Sigmoid colon (tissue), 7 donors: ENCODE measurements at regions of chr17 and their contacts with region 1.

Region 1: GRCh38 chr17:4986951-4987766 is at the start of gene CAMTA2:
- DNase-seq: peak; percentile 95
- H3K4me3 ChIP-seq: peak within 1 kb of the TSS; percentile 68 to 97 (median 80)
- H3K27ac ChIP-seq: peak within 1 kb of the TSS; percentile 93 to 97 (median 95)
- H3K4me1 ChIP-seq: peaks cover 0 to 31% (median 25%) of the 10 kb centered on the region in 4 donors
- H3K27me3 ChIP-seq: no peaks in the 10 kb centered on the region
- CTCF ChIP-seq: peak; percentile 75 to 83 (median 78)
- EP300 ChIP-seq: no peak
- POLR2A ChIP-seq: peak; percentile 46 to 64
- total RNA-seq, gene CAMTA2: 9.9 to 24.6 (median 21.7) TPM

Region 2: GRCh38 chr17:4789901-4790704 is 197.1 kb before region 1 on chr17:
- intact Hi-C with region 1: loop called (anchors 5 kb)
- DNase-seq: peak; percentile 94
- H3K4me3 ChIP-seq: peak overlapping the region; percentile 59 to 77 (median 72)
- H3K27ac ChIP-seq: peak overlapping the region; percentile 95 to 99 (median 96)
- H3K4me1 ChIP-seq: peaks cover 0 to 46% (median 41%) of the 10 kb centered on the region in 4 donors
- H3K27me3 ChIP-seq: peaks cover 0 to 9% (median 0%) of the 10 kb centered on the region in 3 donors
- CTCF ChIP-seq: peak; percentile 31 to 86 (median 74)
- EP300 ChIP-seq: no peak
- POLR2A ChIP-seq: peak; percentile 91

Region 3: GRCh38 chr17:4908301-4908700 is 78.9 kb before region 1 on chr17:
- intact Hi-C with region 1: loop called (anchors 2 kb)
- DNase-seq: no peak
- H3K4me3 ChIP-seq: no peak overlapping the region
- H3K27ac ChIP-seq: peak overlapping the region in 2 of 4 donors; percentile 15 to 57
- H3K4me1 ChIP-seq: peaks cover 0 to 11% (median 5%) of the 10 kb centered on the region in 4 donors
- H3K27me3 ChIP-seq: peaks cover 0 to 15% (median 7%) of the 10 kb centered on the region in 3 donors
- CTCF ChIP-seq: no peak
- EP300 ChIP-seq: no peak
- POLR2A ChIP-seq: no peak

Region 4: DNA sequence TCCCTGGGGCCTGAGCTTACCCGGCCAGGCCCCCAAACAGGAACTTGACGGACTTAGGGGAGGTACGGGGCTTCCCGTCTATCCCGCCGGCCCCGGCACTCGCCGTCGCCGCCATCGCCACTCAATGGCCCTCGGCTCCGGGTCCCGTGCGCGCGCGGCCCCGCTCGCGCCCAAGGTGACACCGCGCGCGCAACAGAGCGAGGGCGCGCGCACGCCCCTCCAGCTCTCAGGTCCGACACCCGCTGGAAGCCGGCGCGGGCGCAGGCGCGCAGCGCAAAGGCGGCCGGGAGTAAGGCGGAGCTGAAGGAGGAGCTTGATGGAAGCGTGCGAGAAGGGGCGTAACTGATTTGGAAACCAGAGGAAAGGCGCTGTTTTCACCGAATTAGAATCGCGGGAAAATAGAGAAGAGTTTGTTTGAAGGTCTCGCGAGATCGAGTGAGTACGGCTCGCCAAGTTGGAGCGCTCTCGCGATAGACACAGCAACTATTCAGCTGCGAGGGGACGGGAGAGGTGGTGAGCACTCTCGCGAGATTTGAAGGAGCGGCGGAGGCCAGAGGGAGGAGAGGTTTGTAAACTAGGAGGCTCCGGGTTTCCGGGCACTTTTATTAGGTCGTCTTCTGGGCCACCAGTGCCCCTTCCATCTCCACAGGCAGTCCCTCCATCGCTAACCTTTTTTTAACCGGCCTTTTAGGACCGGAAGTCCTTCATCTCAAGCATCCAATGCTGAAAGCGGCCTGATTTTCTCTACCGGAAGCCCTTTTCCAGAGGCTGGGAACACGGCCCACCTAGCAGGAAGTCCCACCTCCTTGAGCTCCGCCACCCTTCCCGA is 47.1 kb before region 1 on chr17 and contains the starts of genes RNF167 and SLC25A11:
- intact Hi-C with region 1: loop called (anchors 1 kb)
- DNase-seq: peak; percentile 99
- H3K4me3 ChIP-seq: peak within 1 kb of the TSS; percentile 62 to 83 (median 73)
- H3K27ac ChIP-seq: peak within 1 kb of the TSS; percentile 91 to 96 (median 94)
- H3K4me1 ChIP-seq: peaks cover 0 to 57% (median 42%) of the 10 kb centered on the region in 4 donors
- H3K27me3 ChIP-seq: no peaks in the 10 kb centered on the region
- CTCF ChIP-seq: no peak
- EP300 ChIP-seq: peak in 1 of 4 donors; percentile 64
- POLR2A ChIP-seq: peak; percentile 32 to 48
- total RNA-seq, gene RNF167: 51.2 to 71.2 (median 60.3) TPM
- total RNA-seq, gene SLC25A11: 41.0 to 60.3 (median 48.6) TPM

Region 5: DNA sequence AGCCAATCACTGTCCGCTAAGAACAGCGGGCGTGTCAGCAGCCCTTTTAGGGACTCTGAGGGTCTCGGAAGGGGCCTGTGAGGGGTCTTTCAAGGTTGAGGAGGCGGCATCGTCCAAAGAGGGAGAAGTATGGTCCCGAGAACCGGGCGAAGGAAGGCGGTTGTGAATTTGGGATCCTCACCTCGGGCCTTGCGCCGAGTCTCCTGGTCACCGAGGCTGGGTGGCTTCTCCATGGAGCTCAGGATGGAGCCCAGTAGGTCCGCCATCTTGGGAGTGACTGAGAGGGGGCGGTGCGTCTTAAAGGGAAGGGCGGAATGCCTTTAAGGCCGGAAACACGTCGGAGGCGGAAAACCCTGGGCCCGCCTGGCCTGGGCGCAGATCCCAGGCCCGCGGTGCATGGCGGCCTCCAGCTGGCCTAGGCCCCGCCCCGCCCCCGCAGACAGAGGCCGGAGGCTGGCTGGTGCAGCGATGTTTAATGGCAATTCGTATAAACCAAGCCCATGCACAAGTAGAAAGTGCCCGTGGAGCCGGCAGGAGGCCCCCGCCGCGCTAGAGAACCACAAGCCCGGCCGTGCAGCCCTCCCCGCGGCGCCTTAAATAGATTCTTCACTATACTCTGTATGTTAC is 19.5 kb before region 1 on chr17 and contains the start of gene SPAG7:
- intact Hi-C with region 1: loop called (anchors 2 kb)
- DNase-seq: peak; percentile 98
- H3K4me3 ChIP-seq: peak within 1 kb of the TSS; percentile 66 to 71 (median 69)
- H3K27ac ChIP-seq: peak within 1 kb of the TSS; percentile 91 to 97 (median 95)
- H3K4me1 ChIP-seq: peaks cover 0 to 49% (median 40%) of the 10 kb centered on the region in 4 donors
- H3K27me3 ChIP-seq: no peaks in the 10 kb centered on the region
- CTCF ChIP-seq: peak in 1 of 4 experiments; percentile 13
- EP300 ChIP-seq: no peak
- POLR2A ChIP-seq: peak; percentile 46 to 78
- total RNA-seq, gene SPAG7: 42.6 to 84.5 (median 72.3) TPM